Pancreas (tissue), 10 donors: ENCODE measurements at regions of chr1 and their contacts with region 1.

Region 1: GRCh38 chr1:150537732-150538684 is 11.2 kb upstream of the ADAMTSL4 start:
- DNase-seq: no peak
- ATAC-seq: peak in 2 of 4 donors; percentile 33 to 53
- H3K4me3 ChIP-seq: no peak overlapping the region
- H3K27ac ChIP-seq: no peak overlapping the region
- H3K4me1 ChIP-seq: peaks cover 0 to 2% (median under 1%) of the 10 kb centered on the region in 3 donors
- H3K27me3 ChIP-seq: no peaks in the 10 kb centered on the region
- CTCF ChIP-seq: no peak

Region 2: DNA sequence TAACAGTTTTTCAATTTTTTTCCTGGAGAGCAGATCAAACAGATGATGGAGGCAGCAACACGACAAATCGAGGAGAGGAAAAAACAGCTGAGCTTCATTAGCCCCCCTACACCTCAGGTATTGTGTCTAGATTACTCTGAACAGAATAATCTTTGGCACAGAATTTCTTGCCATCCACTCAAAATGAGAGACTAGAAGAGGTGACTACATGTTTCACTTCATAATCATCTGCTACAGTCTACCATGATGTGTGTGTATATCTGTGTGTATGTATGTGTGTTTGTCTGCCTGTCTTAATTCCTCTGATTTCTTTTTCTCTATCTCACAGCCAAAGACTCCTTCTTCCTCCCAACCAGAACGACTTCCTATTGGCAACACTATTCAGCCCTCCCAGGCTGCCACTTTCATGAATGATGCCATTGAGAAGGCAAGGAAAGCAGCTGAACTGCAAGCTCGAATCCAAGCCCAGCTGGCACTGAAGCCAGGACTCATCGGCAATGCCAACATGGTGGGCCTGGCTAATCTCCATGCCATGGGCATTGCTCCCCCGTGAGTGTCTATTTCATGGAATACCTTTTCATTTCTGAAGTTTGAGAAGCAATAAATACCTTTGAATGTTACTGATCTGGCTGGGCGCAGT is 205.2 kb before region 1 on chr1:
- intact Hi-C with region 1: no loop called
- DNase-seq: no peak
- ATAC-seq: no peak
- H3K4me3 ChIP-seq: no peak overlapping the region
- H3K27ac ChIP-seq: no peak overlapping the region
- H3K4me1 ChIP-seq: no peaks in the 10 kb centered on the region
- H3K27me3 ChIP-seq: no peaks in the 10 kb centered on the region
- CTCF ChIP-seq: no peak

Region 3: GRCh38 chr1:150456146-150456647 is 81.8 kb before region 1 on chr1:
- intact Hi-C with region 1: loop called in 1 of 3 experiments (anchors 10 kb)
- DNase-seq: no peak
- ATAC-seq: no peak
- H3K4me3 ChIP-seq: no peak overlapping the region
- H3K27ac ChIP-seq: no peak overlapping the region
- H3K4me1 ChIP-seq: no peaks in the 10 kb centered on the region
- H3K27me3 ChIP-seq: no peaks in the 10 kb centered on the region
- CTCF ChIP-seq: no peak

Region 4: GRCh38 chr1:150473659-150474058 is 64.3 kb before region 1 on chr1:
- intact Hi-C with region 1: loop called in 1 of 3 experiments (anchors 5 kb)
- DNase-seq: no peak
- ATAC-seq: peak in 3 of 4 donors; percentile 24 to 60 (median 36)
- H3K4me3 ChIP-seq: no peak overlapping the region
- H3K27ac ChIP-seq: no peak overlapping the region
- H3K4me1 ChIP-seq: peaks cover 0 to 5% (median 4%) of the 10 kb centered on the region in 3 donors
- H3K27me3 ChIP-seq: no peaks in the 10 kb centered on the region
- CTCF ChIP-seq: no peak